PC-9 (cell line): ENCODE measurements at regions of chr11 and their contacts with region 1.

Region 1: GRCh38 chr11:27158722-27159679 is 118.4 kb downstream of the BBOX1 start:
- DNase-seq: peak; percentile 40 to 56
- H3K4me3 ChIP-seq: no peak overlapping the region
- H3K27ac ChIP-seq: no peak overlapping the region
- H3K4me1 ChIP-seq: no peaks in the 10 kb centered on the region
- H3K27me3 ChIP-seq: no peaks in the 10 kb centered on the region
- CTCF ChIP-seq: peak; percentile 91

Region 2: GRCh38 chr11:26286472-26287066 is 872.4 kb before region 1 on chr11:
- CTCF ChIA-PET with region 1: interaction called, 5 read pairs
- POLR2A ChIA-PET with region 1: no interaction called
- intact Hi-C with region 1: loop called (anchors 2 kb)
- DNase-seq: no peak
- H3K4me3 ChIP-seq: no peak overlapping the region
- H3K27ac ChIP-seq: no peak overlapping the region
- H3K4me1 ChIP-seq: no peaks in the 10 kb centered on the region
- H3K27me3 ChIP-seq: no peaks in the 10 kb centered on the region
- CTCF ChIP-seq: no peak; the same call in 1 of the 2 replicates

Region 3: DNA sequence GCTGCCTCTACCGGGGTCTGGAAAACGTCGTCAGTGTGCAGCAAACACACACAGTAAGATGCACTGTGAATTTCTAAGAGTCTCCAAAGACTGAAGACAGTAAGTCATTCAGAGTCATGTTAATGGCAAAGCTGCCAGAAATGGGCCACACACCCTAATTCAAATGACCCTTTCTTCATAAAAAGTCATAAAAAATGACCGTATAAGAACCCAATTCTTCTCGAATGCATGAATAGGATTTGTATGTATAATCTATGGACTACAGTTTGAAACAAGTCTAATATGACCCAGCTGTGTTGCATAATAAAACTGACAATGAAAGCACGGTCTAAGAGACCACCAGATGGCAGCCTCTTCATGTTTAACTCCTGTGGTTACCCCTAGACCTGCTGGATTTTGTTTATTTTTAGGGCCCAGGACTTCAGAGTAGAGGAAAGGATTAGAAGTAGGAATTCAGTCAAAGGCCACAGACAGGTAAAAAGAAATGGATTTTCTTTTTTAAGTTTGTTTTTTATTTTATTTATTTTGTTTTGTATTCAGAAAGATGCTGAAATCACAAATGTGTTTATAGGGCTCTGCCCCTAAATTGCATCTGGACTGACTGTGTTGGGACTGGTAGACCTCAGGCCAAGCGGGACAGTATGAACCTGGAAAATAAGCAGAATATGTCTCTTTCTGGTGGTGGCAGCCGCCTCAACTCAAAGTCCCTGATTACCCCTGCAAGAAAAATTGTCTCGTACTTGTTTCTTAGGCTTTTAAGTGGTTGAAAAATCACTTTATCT is 405.1 kb before region 1 on chr11:
- CTCF ChIA-PET with region 1: interaction called, 4 read pairs
- POLR2A ChIA-PET with region 1: no interaction called
- intact Hi-C with region 1: loop called (anchors 2 kb)
- DNase-seq: peak; percentile 8 to 38
- H3K4me3 ChIP-seq: no peak overlapping the region
- H3K27ac ChIP-seq: no peak overlapping the region
- H3K4me1 ChIP-seq: no peaks in the 10 kb centered on the region
- H3K27me3 ChIP-seq: no peaks in the 10 kb centered on the region
- CTCF ChIP-seq: peak; percentile 83

Region 4: DNA sequence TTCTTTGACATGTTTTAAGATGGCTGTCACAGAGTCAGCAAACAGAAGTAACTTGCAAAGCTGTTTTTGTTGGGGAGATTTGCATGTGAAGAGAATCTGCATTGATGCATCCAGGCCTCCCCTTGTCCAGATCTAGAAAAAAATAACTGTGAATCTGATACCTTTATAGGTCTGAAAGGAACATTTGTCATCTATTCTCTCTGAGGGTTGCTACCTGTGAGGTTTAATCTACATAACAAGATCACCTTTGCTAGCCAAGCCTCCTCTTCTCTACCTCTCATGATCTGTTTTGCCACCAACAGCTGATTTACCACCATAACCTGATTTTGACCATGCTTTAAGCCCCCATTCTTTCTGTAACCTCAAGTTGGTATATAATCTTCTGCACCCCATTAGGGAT is 390.0 kb before region 1 on chr11:
- CTCF ChIA-PET with region 1: no interaction called
- POLR2A ChIA-PET with region 1: no interaction called
- intact Hi-C with region 1: no loop called
- DNase-seq: no peak
- H3K4me3 ChIP-seq: no peak overlapping the region
- H3K27ac ChIP-seq: no peak overlapping the region
- H3K4me1 ChIP-seq: no peaks in the 10 kb centered on the region
- H3K27me3 ChIP-seq: no peaks in the 10 kb centered on the region
- CTCF ChIP-seq: no peak

Region 5: GRCh38 chr11:27281740-27282590 is 123.0 kb after region 1 on chr11:
- CTCF ChIA-PET with region 1: no interaction called
- POLR2A ChIA-PET with region 1: interaction called, 22 read pairs
- intact Hi-C with region 1: no loop called
- DNase-seq: no peak
- H3K4me3 ChIP-seq: no peak overlapping the region
- H3K27ac ChIP-seq: no peak overlapping the region
- H3K4me1 ChIP-seq: no peaks in the 10 kb centered on the region
- H3K27me3 ChIP-seq: no peaks in the 10 kb centered on the region
- CTCF ChIP-seq: no peak